ENCODE measurements at regions of chr3 and their contacts with region 1.

Region 1: GRCh38 chr3:3126477-3127431 is at the start of gene TRNT1:
- DNase-seq: peak; percentile 94 to 96
- H3K4me3 ChIP-seq: peak within 1 kb of the TSS; percentile 93
- H3K4me3 Mint-ChIP-seq: peak within 1 kb of the TSS; percentile 99
- H3K27ac Mint-ChIP-seq: peak within 1 kb of the TSS; percentile 98
- H3K4me1 ChIP-seq: no peaks in the 10 kb centered on the region
- H3K4me1 Mint-ChIP-seq: peaks cover 11% of the 10 kb centered on the region
- H3K27me3 ChIP-seq: no peaks in the 10 kb centered on the region
- H3K27me3 Mint-ChIP-seq: no peaks in the 10 kb centered on the region
- CTCF ChIP-seq: no peak
- total RNA-seq, gene TRNT1: 40.1 and 43.6 TPM in 2 replicates

Region 2: DNA sequence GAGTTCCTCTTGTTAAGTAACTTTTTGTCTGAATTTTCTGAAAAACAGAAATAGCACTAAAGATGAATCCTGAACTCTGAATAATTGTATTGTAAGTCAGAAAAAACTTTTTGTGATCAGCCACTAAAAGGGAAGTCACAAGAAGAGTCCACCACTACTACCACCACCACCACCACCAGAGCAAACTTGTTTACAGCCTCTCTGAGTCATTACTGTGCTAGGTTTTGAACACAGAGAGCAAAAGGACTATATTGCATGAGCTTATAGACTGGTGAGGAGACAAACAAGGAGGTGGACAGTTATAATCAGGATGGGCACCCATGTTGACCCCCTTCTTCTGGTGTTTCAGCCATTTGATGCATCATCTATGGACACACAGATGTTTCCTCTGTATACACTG is 158.3 kb before region 1 on chr3:
- CTCF ChIA-PET with region 1: no interaction called
- POLR2A ChIA-PET with region 1: no interaction called
- intact Hi-C with region 1: loop called (anchors 10 kb)
- DNase-seq: no peak
- H3K4me3 ChIP-seq: no peak overlapping the region
- H3K4me3 Mint-ChIP-seq: peak overlapping the region; percentile 27
- H3K27ac Mint-ChIP-seq: no peak overlapping the region
- H3K4me1 ChIP-seq: peaks cover 28% of the 10 kb centered on the region
- H3K4me1 Mint-ChIP-seq: peaks cover 6% of the 10 kb centered on the region
- H3K27me3 ChIP-seq: no peaks in the 10 kb centered on the region
- H3K27me3 Mint-ChIP-seq: no peaks in the 10 kb centered on the region
- CTCF ChIP-seq: no peak

Region 3: GRCh38 chr3:3031326-3031725 is 95.4 kb before region 1 on chr3:
- CTCF ChIA-PET with region 1: no interaction called
- POLR2A ChIA-PET with region 1: no interaction called
- intact Hi-C with region 1: loop called (anchors 5 kb)
- DNase-seq: peak in 1 of 2 experiments; percentile 31
- H3K4me3 ChIP-seq: no peak overlapping the region
- H3K4me3 Mint-ChIP-seq: no peak overlapping the region
- H3K27ac Mint-ChIP-seq: peak overlapping the region; percentile 59
- H3K4me1 ChIP-seq: peaks cover 28% of the 10 kb centered on the region
- H3K4me1 Mint-ChIP-seq: peaks cover 27% of the 10 kb centered on the region
- H3K27me3 ChIP-seq: no peaks in the 10 kb centered on the region
- H3K27me3 Mint-ChIP-seq: no peaks in the 10 kb centered on the region
- CTCF ChIP-seq: no peak

Region 4: GRCh38 chr3:3053974-3054373 is 72.8 kb before region 1 on chr3:
- CTCF ChIA-PET with region 1: no interaction called
- POLR2A ChIA-PET with region 1: no interaction called
- intact Hi-C with region 1: loop called (anchors 2 kb)
- DNase-seq: peak; percentile 51 to 54
- H3K4me3 ChIP-seq: peak overlapping the region; percentile 17
- H3K4me3 Mint-ChIP-seq: peak overlapping the region; percentile 68
- H3K27ac Mint-ChIP-seq: peak overlapping the region; percentile 93
- H3K4me1 ChIP-seq: peaks cover 43% of the 10 kb centered on the region
- H3K4me1 Mint-ChIP-seq: peaks cover 32% of the 10 kb centered on the region
- H3K27me3 ChIP-seq: no peaks in the 10 kb centered on the region
- H3K27me3 Mint-ChIP-seq: no peaks in the 10 kb centered on the region
- CTCF ChIP-seq: no peak

Measured in Caco-2 (cell line).